HEK293T (cell line): ENCODE measurements at regions of chr2 and their contacts with region 1.

Region 1: GRCh38 chr2:221851531-221852045 is 279.5 kb upstream of the EPHA4 start:
- DNase-seq: no peak

Region 2: GRCh38 chr2:221777119-221777518 is 74.5 kb before region 1 on chr2:
- CTCF ChIA-PET with region 1: interaction called, 10 read pairs
- POLR2A ChIA-PET with region 1: no interaction called
- DNase-seq: no peak

Region 3: GRCh38 chr2:222074671-222075070 is 223.1 kb after region 1 on chr2:
- CTCF ChIA-PET with region 1: no interaction called
- POLR2A ChIA-PET with region 1: no interaction called
- DNase-seq: no peak